Activated CD4-positive, alpha-beta T cell treated with anti-CD3 and anti-CD28 coated beads for 36 hours (primary cell): ENCODE measurements at regions of chr6 and their contacts with region 1.

Region 1: DNA sequence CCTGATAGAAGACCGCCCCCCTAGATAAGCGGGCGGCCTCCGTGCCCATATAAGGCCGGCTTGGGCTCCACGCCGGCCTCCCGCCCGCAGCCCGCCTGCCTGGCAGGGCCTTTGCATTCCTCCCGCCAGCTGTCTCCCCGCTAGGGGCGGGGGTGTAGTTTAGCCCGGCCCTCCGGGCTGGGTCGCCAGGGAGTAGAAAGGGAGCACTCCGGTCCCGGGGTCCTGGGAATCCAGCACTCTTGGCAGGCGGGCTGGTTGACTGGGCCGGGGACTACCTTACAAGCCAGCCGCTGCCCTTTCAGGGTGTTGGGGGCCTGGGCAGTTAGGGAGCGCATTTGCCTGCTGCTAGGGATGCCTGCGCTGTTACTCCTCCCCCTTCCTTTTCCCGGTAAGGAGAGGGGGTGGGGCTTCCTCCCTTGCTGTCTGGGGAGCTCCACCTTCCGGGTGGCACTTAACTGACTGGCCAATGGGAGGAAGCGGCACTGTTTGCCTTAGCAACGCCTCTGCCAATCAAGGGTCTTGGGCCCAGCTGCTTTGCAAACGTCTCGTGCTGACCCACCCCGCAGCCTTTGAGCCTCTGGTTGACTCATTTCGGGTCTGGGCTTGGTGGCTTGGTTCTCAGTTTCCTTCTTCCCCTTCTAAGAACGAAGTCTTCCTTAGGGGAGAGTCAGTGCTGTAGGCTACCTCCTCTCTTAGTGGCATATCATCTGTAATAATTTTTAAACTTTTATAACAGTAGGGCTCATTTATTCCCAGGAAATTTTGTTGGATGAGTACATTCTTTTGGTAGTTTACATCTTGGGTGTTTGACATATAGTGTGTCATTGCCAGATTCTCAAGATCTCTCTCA is 3.4 kb downstream of the SRF start:
- DNase-seq: peak; percentile 98
- ATAC-seq: peak; percentile 80
- H3K4me3 Mint-ChIP-seq: peak overlapping the region; percentile 85
- H3K27ac Mint-ChIP-seq: peak overlapping the region; percentile 79
- H3K4me1 Mint-ChIP-seq: peaks cover 38% of the 10 kb centered on the region
- H3K27me3 Mint-ChIP-seq: no peaks in the 10 kb centered on the region

Region 2: DNA sequence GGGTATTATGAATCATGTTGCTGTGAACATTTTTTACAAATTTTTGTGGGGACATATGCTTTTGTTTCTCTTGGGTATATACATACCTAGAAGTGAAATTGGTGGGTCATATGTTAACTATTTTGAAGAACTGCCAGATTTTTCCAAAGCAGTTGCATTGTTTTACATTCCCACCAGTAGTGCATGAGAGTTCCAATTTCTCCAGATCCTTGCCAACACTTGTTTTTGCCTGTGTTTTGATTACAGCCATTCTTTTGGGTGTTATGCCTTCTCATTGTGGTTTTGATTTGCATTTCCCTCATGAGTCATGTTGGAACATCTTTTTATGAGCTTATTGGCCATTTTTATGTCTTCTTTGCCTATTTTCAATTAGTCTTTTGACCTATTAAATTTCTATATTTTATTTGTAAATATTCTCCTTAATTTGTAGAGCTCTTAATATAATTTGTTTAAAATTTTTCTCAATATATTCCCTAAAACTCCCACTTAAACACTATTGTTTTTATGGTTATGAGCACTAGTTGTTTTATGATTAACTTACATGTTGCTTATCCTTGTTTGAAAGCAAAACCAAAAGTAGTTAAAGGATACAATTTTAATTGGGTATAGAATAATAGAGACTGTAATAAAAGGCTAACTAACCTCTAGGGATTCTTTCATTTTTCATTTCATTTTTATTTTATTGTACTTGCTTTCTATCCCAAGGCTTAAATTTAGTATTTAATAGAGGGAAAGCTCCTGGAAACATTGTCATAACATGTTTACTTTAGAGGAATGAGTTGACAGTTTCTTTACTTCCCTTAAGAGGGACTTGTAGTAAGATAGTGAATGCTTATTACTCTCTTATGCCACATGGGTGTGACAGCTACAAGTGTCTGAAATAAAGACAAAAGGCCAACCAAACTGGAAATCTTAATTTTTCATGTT is 605.1 kb before region 1 on chr6:
- CTCF ChIA-PET with region 1: no interaction called
- POLR2A ChIA-PET with region 1: no interaction called
- intact Hi-C with region 1: loop called in 1 of 2 experiments (anchors 5 kb)
- DNase-seq: no peak
- ATAC-seq: peak; percentile 66
- H3K4me3 Mint-ChIP-seq: no peak overlapping the region
- H3K27ac Mint-ChIP-seq: peak overlapping the region; percentile 79
- H3K4me1 Mint-ChIP-seq: peaks cover 57% of the 10 kb centered on the region
- H3K27me3 Mint-ChIP-seq: no peaks in the 10 kb centered on the region

Region 3: DNA sequence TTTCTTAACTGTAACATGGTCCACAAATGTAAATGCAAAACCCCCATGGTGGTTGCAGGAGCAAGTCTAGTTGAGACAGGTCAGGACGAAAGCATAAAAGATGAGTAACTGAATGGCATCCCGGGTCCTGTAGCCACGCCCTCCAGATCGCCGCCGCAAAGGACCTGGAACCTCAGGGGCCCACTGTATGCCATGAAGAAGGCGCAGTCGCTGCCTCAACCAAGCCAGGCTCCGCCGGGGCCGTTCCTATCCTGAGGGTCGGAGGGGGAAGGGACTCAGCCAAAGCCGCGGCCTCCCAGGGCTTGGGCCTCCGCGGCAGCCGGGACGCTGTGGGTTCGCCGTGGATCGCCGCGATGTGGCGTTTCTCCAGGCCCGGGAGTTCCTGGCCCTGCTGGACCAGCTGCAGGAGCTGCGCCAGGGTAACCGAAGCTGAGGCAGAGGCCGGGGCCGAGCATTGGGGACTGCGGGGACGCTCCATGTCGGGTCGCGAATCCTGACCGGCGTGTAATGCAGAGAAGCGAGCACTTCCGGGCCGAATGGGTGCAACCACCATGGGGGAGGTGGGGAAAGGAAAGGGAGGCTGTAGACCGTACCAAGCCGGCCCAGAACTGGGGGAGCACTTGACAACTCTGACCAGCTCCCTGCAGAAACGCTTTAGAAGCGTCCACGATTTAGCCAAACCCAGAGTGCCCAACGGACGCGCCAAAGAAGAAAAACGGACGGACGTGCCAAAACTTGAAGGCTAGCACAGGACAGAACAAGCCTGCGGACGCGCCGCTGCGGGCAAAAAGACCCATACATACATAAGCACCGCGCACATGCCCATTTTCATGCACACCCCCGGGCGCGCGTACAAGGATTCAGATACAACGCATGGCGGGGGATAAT is 283.9 kb before region 1 on chr6:
- CTCF ChIA-PET with region 1: no interaction called
- POLR2A ChIA-PET with region 1: no interaction called
- intact Hi-C with region 1: loop called in 1 of 2 experiments (anchors 1 kb)
- DNase-seq: peak; percentile 95
- ATAC-seq: peak; percentile 89
- H3K4me3 Mint-ChIP-seq: peak overlapping the region; percentile 90
- H3K27ac Mint-ChIP-seq: peak overlapping the region; percentile 98
- H3K4me1 Mint-ChIP-seq: peaks cover 31% of the 10 kb centered on the region
- H3K27me3 Mint-ChIP-seq: no peaks in the 10 kb centered on the region

Region 4: DNA sequence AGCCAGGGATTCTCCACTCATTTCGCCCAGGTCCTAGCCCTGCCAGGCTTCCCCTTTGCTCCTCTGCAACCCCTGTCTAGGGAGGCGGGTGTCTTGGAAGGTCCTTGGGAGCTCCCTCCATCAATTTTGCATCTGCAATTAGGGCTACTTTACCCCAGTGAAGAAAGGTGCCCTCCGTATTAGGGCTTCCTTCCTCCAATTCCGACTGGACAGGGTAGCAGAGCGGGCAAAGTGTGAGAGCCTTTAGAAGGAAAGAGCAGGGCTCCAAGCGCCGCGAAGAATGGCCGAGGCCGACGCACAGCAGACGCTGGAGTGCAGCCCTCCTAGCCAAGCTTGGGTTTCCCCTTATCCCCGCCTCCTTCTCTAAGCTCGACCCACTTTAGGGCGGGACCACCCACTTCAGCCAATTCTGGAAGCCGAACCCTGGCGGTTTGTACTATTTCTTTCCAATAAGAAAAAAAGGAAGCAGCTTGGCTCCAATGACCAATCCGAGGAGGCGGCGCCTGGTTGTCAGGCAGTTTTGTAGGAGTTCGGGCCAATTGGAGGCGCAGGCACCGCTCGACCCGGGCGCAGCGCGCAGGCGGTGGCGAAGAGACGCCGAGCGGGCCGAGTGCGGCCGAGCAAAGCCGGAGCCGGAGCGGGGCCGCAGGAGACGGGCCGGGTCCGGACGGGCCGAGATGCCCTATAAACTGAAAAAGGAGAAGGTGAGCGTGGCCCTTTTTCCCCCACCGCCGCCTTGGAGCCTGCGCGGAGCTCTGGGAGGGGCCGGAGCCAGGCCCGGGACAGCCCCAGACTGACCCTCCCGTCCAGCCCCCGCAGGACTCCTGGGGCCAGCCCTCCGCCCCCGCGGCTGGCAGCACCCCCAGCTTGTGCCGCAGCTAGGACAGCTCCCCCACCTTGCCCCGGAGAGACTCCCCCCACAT is 190.2 kb before region 1 on chr6 and contains the start of gene PPP2R5D:
- CTCF ChIA-PET with region 1: interaction called, 3 read pairs
- POLR2A ChIA-PET with region 1: no interaction called
- intact Hi-C with region 1: loop called in 1 of 2 experiments (anchors 1 kb)
- DNase-seq: peak; percentile 98
- ATAC-seq: peak; percentile 92
- H3K4me3 Mint-ChIP-seq: peak within 1 kb of the TSS; percentile 79
- H3K27ac Mint-ChIP-seq: peak within 1 kb of the TSS; percentile 82
- H3K4me1 Mint-ChIP-seq: peaks cover 52% of the 10 kb centered on the region
- H3K27me3 Mint-ChIP-seq: no peaks in the 10 kb centered on the region
- total RNA-seq, gene PPP2R5D: 51.0 to 57.3 TPM

Region 5: GRCh38 chr6:43228951-43229802 is 54.7 kb after region 1 on chr6 and contains the start of gene DNPH1:
- CTCF ChIA-PET with region 1: interaction called, 3 read pairs
- POLR2A ChIA-PET with region 1: interaction called, 3 read pairs
- intact Hi-C with region 1: loop called (anchors 1 to 2 kb)
- DNase-seq: peak; percentile 88
- ATAC-seq: peak; percentile 82
- H3K4me3 Mint-ChIP-seq: peak within 1 kb of the TSS; percentile 92
- H3K27ac Mint-ChIP-seq: peak within 1 kb of the TSS; percentile 91
- H3K4me1 Mint-ChIP-seq: peaks cover 41% of the 10 kb centered on the region
- H3K27me3 Mint-ChIP-seq: peaks cover 2% of the 10 kb centered on the region
- total RNA-seq, gene DNPH1: 58.5 to 80.3 TPM

Region 6: GRCh38 chr6:43257367-43258145 is 83.1 kb after region 1 on chr6:
- CTCF ChIA-PET with region 1: no interaction called
- POLR2A ChIA-PET with region 1: no interaction called
- intact Hi-C with region 1: no loop called
- DNase-seq: peak; percentile 39
- ATAC-seq: peak; percentile 24
- H3K4me3 Mint-ChIP-seq: no peak overlapping the region
- H3K27ac Mint-ChIP-seq: no peak overlapping the region
- H3K4me1 Mint-ChIP-seq: peaks cover 13% of the 10 kb centered on the region
- H3K27me3 Mint-ChIP-seq: peaks cover 4% of the 10 kb centered on the region

Region 7: GRCh38 chr6:43427406-43428111 is 253.1 kb after region 1 on chr6 and contains the start of gene ABCC10:
- CTCF ChIA-PET with region 1: interaction called, 3 read pairs
- POLR2A ChIA-PET with region 1: interaction called, 8 read pairs
- intact Hi-C with region 1: loop called in 1 of 2 experiments (anchors 1 kb)
- DNase-seq: peak; percentile 97
- ATAC-seq: peak; percentile 97
- H3K4me3 Mint-ChIP-seq: peak within 1 kb of the TSS; percentile 94
- H3K27ac Mint-ChIP-seq: peak within 1 kb of the TSS; percentile 97
- H3K4me1 Mint-ChIP-seq: peaks cover 21% of the 10 kb centered on the region
- H3K27me3 Mint-ChIP-seq: no peaks in the 10 kb centered on the region
- total RNA-seq, gene ABCC10: 27.8 to 29.0 TPM

Region 8: GRCh38 chr6:43575772-43576551 is 401.5 kb after region 1 on chr6 and contains the starts of genes POLH and XPO5:
- CTCF ChIA-PET with region 1: no interaction called
- POLR2A ChIA-PET with region 1: no interaction called
- intact Hi-C with region 1: loop called in 1 of 2 experiments (anchors 5 kb)
- DNase-seq: peak; percentile 95
- ATAC-seq: peak; percentile 91
- H3K4me3 Mint-ChIP-seq: peak within 1 kb of the TSS; percentile 90
- H3K27ac Mint-ChIP-seq: peak within 1 kb of the TSS; percentile 86
- H3K4me1 Mint-ChIP-seq: peaks cover 44% of the 10 kb centered on the region
- H3K27me3 Mint-ChIP-seq: no peaks in the 10 kb centered on the region
- total RNA-seq, gene POLH: 35.2 to 37.9 TPM
- total RNA-seq, gene XPO5: 108 to 109 TPM